ENCODE measurements at regions of chr11 and their contacts with region 1.

Region 1: DNA sequence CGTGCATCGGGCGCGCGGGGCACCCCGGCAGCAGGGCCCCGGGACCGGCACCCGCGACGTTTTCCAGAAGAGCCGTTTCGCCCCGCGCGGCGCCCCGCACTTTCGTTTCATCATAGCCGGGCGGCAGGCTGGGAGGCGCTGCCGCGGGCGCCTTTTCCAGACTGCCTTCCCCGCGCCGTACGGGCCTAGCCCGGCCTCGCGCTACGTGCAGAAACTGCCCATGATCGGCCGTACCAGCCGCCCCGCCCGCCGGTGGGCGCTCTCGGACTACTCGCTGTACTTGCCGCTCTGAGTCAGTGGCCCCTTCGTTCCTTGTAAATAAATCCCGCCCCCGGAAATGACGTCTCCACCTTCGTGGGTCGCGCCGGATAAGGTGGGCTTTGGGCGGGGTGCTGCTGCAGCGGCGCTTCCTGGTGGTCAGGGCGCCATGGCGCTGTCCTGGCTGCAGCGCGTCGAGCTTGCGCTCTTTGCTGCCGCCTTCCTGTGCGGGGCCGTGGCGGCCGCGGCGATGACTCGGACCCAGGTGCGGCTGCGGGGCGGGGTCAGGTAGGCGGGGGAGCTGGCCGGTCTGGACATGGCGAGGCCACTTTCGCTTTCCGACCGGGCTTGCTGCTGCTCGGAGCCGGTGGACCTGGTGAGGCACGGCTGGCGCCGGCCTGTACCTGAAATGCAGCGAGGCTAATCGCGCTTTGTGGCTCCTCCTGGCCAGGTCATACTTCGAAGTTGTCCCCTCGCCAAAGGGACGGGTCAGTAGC is at the start of gene TMEM179B:
- DNase-seq: peak; percentile 100
- H3K4me3 ChIP-seq: peak within 1 kb of the TSS; percentile 84
- H3K27ac ChIP-seq: peak within 1 kb of the TSS; percentile 99
- H3K4me1 ChIP-seq: peaks cover 10% of the 10 kb centered on the region
- H3K27me3 ChIP-seq: no peaks in the 10 kb centered on the region
- CTCF ChIP-seq: no peak
- total RNA-seq, gene TMEM179B: 46.7 to 54.5 TPM

Region 2: DNA sequence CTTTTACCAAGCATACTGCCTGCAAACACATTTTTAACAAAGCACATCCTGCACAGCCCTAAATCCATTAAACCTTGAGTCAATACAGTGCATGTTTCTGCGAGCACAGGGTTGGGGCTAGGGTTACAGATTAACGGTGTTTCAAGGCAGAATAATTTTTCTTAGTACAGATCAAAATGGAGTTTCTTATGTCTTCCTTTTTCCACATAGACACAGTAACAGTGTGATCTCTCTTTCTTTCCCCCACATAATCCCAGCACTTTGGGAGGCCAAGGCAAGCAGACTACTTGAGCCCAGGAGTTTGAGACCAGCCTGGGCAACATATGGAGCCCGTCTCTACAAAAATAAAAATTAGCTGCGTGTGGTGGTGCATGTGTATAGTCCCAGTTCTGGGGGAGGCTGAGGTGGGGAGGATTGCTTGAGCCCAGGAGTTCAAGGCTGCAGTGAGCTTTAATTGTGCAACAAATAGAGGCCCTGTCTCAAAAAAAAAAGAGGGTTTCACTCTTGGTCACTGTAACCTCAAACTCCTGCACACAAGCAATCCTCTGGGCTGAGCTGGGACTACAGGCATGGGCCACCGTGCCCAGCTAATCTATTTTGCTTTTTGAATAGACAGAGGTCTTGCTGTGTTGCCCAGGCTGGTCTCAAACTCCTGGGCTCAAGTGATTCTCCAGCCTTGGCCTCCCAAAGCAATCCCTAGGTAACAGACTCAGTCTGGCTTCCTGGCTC is 73.8 kb after region 1 on chr11:
- intact Hi-C with region 1: loop called (anchors 5 kb)
- DNase-seq: no peak
- H3K4me3 ChIP-seq: no peak overlapping the region
- H3K27ac ChIP-seq: no peak overlapping the region
- H3K4me1 ChIP-seq: no peaks in the 10 kb centered on the region
- H3K27me3 ChIP-seq: no peaks in the 10 kb centered on the region
- CTCF ChIP-seq: no peak